CD8-positive, alpha-beta memory T cell (primary cell): ENCODE measurements at regions of chr1 and their contacts with region 1.

Region 1: GRCh38 chr1:156295391-156295947 is at the start of gene GLMP:
- DNase-seq: peak; percentile 34 to 69 (median 43)
- H3K4me3 ChIP-seq: peak within 1 kb of the TSS; percentile 81
- H3K4me3 Mint-ChIP-seq: peak within 1 kb of the TSS; percentile 86 to 95 (median 90)
- H3K27ac ChIP-seq: peak within 1 kb of the TSS; percentile 59
- H3K27ac Mint-ChIP-seq: peak within 1 kb of the TSS; percentile 45 to 90 (median 87)
- H3K4me1 ChIP-seq: peaks cover 12% of the 10 kb centered on the region
- H3K4me1 Mint-ChIP-seq: peaks cover 14 to 26% (median 19%) of the 10 kb centered on the region in 3 donors
- H3K27me3 ChIP-seq: no peaks in the 10 kb centered on the region
- H3K27me3 Mint-ChIP-seq: no peaks in the 10 kb centered on the region
- total RNA-seq, gene GLMP: 19.5 to 20.9 TPM

Region 2: DNA sequence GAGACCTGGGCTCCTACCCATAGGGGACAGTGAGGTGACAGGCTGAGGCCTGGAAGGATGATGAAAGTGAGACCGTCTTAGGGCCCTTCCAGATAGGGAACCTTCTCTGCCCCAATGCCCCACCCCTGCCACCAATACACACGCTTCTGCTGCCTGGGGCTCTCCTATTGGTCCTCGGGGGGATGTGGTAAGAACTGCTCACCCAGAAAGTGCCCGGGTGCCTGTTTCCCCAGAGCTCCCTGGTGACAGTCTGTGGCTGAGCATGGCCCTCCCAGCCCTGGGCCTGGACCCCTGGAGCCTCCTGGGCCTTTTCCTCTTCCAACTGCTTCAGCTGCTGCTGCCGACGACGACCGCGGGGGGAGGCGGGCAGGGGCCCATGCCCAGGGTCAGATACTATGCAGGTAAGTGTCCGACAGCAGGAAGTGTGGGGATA is 141.1 kb before region 1 on chr1:
- CTCF ChIA-PET with region 1: no interaction called
- POLR2A ChIA-PET with region 1: no interaction called
- DNase-seq: peak in 3 of 5 donors; percentile 39 to 59 (median 43)
- H3K4me3 ChIP-seq: no peak overlapping the region
- H3K4me3 Mint-ChIP-seq: peak overlapping the region; percentile 74 to 90 (median 78)
- H3K27ac ChIP-seq: no peak overlapping the region
- H3K27ac Mint-ChIP-seq: peak overlapping the region; percentile 37 to 94 (median 86)
- H3K4me1 ChIP-seq: no peaks in the 10 kb centered on the region
- H3K4me1 Mint-ChIP-seq: peaks cover 39 to 40% (median 40%) of the 10 kb centered on the region in 3 donors
- H3K27me3 ChIP-seq: no peaks in the 10 kb centered on the region
- H3K27me3 Mint-ChIP-seq: peaks cover 0 to 7% of the 10 kb centered on the region in 2 donors

Region 3: DNA sequence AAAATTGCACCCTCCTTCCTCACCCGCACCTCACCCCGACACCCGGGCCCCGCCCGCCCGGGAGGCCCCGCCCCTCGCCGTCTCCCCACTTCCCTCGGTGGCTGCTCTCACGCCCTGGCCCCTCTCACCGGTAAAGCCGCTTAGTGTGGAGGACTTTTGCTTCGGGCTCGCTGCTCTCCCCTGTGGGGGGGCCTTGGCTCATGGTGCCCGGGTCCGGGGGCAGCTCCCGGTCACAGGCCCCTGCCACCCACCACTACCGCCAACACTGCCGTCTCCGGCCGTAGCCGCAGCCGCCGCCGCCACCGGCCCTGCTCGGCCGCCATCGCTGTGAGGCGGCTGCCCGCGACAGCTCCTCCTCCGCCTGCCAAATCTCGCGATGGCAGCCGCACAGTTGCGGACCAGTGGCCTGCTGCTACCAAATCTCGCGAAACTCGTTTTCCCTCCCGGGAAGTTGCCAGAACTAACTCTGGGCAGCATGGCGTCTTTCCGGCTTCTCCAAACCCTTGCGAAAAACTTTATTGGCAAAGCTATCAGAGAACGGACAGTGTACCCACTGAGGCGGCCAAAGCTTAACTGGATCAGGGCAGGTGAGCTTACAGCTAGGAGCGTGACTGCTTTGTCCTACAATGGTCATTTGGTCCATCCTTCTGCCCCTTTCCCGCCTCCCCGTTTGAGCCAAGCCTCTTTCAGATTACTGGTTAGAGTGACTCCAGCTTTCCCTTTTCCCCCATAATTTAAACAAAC is 12.8 kb before region 1 on chr1 and contains the start of gene SMG5:
- CTCF ChIA-PET with region 1: interaction called, 6 read pairs
- POLR2A ChIA-PET with region 1: interaction called, 18 read pairs
- DNase-seq: peak; percentile 94 to 98 (median 96)
- H3K4me3 ChIP-seq: peak within 1 kb of the TSS; percentile 92
- H3K4me3 Mint-ChIP-seq: peak within 1 kb of the TSS; percentile 91 to 97 (median 95)
- H3K27ac ChIP-seq: peak within 1 kb of the TSS; percentile 74
- H3K27ac Mint-ChIP-seq: peak within 1 kb of the TSS; percentile 89 to 97 (median 94)
- H3K4me1 ChIP-seq: peaks cover 29% of the 10 kb centered on the region
- H3K4me1 Mint-ChIP-seq: peaks cover 42 to 51% (median 44%) of the 10 kb centered on the region in 3 donors
- H3K27me3 ChIP-seq: no peaks in the 10 kb centered on the region
- H3K27me3 Mint-ChIP-seq: no peaks in the 10 kb centered on the region
- total RNA-seq, gene SMG5: 110 to 117 TPM

Region 4: DNA sequence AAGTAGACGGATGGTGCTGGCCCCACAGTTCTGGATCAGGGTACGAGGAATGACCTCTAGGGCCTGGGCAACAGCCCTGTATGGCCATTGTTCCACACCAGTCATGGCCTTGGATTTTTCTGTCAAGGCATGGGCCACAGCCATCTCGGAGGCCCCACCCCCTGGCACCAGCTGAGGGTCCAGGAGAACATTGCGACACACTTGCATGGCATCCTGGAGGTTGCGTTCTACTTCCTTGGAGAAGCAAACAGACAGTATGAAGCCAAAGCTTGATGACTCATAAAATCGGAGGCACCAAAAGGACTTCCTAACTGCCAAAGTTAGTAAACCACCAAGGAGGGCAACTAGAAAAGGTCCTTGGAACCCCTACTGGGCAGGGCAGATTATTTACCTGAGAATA is 15.5 kb after region 1 on chr1:
- CTCF ChIA-PET with region 1: no interaction called
- POLR2A ChIA-PET with region 1: no interaction called
- DNase-seq: no peak
- H3K4me3 ChIP-seq: no peak overlapping the region
- H3K4me3 Mint-ChIP-seq: no peak overlapping the region
- H3K27ac ChIP-seq: no peak overlapping the region
- H3K27ac Mint-ChIP-seq: peak overlapping the region in 1 of 8 donors; percentile 3
- H3K4me1 ChIP-seq: no peaks in the 10 kb centered on the region
- H3K4me1 Mint-ChIP-seq: no peaks in the 10 kb centered on the region
- H3K27me3 ChIP-seq: no peaks in the 10 kb centered on the region
- H3K27me3 Mint-ChIP-seq: no peaks in the 10 kb centered on the region